HEK293 (cell line): ENCODE measurements at regions of chr20 and their contacts with region 1.

Region 1: DNA sequence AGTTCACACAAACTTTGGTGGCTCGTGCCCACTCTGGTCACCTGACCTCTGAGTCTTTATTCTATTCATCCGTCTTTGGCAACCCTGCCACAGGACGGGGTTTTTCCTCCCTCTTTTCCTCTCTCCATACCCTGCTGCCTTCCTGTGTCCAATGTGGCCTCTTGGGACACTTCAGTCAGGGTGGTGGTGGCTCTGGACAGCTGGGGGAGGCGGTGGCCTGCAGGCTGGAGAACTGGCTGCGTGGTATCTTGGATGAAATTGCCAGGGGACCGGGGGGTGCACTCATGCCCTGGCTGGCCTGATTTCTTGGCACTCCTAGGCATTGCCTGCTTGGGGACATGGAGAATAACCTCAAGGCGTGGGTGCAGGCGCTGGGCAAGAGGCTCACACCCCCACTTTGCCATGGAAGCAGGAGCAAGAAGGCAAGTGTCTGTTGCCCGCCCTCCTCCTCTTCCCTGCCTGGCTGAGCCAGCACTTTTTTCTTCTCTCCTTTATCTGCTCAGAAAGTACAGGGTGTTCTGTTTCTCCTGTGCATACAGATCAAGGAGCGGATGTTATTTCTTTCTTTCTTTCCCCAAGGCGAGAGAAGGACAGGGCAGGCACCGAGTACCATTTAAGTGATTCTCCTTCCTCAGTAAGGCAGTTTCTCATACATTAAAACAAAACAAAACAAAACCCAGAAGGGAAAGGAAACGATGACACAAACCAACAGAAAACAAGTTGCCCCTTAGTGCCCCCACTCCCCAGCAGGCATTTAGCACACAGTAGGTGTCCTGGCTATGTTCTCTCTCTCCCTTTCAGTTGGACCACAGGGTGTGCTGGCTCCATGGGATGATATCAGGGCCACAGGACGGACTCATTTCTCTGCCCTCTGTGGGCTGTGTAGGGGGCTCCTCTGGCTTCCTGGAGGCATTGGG is 155.5 kb upstream of the RNF24 start:
- H3K4me3 ChIP-seq: no peak overlapping the region
- H3K27ac ChIP-seq: no peak overlapping the region
- H3K4me1 ChIP-seq: peaks cover 4% of the 10 kb centered on the region; the same call in 1 of the 2 replicates
- CTCF ChIP-seq: no peak

Region 2: GRCh38 chr20:4053071-4053919 is 117.6 kb before region 1 on chr20:
- CTCF ChIA-PET with region 1: no interaction called
- POLR2A ChIA-PET with region 1: no interaction called
- H3K4me3 ChIP-seq: no peak overlapping the region
- H3K27ac ChIP-seq: no peak overlapping the region
- H3K4me1 ChIP-seq: 0 out of 2 replicates have a peak, but pooled peaks cover 2% of the 10 kb centered on the region
- CTCF ChIP-seq: no peak

Region 3: DNA sequence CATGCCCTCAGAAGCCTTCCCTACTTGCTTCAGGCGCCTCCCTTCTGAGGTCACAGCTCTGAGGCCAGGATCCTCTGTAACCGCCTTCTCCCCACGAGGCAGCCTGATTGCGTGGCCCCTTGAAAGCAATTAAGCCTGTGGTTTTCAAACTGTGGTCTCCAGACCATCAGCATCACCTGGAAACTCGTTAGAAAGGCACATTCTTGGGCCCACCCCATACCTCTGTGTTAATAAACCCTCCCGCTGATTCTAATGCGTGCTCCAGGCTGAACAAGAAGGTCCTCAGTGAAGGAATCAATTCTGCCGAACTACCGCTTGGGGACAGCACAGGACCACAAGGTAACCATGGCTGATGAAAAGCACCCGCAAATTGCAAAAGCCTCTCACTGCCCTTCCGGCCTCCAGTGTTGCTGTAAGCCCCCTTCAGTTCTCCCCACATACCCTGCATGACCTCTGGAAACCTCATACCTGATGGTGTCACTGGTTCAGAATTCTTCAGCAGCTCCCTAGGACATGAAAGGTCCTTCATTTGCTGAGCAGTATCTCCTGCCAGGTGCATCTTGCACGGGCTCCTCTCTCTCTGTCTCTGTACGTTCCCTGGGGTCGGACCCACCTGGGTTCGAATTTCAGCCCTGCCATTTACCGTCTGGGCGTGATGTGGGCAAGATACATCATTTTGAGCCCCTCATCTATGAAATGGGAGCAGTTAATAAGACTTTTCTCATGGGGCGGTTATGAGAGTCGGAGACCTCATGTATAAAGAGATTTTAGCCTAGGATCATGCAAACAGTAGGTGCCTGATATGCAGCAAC is 62.2 kb before region 1 on chr20:
- CTCF ChIA-PET with region 1: interaction called, 10 read pairs
- POLR2A ChIA-PET with region 1: no interaction called
- H3K4me3 ChIP-seq: no peak overlapping the region
- H3K27ac ChIP-seq: peak overlapping the region; percentile 43; the same call in 1 of the 2 replicates
- H3K4me1 ChIP-seq: no peaks in the 10 kb centered on the region; the same call in 1 of the 2 replicates
- CTCF ChIP-seq: peak; percentile 96